Calu3 (cell line): ENCODE measurements at regions of chr3 and their contacts with region 1.

Region 1: GRCh38 chr3:24318668-24319287 is 175.9 kb downstream of the THRB start:
- DNase-seq: peak; percentile 10
- H3K4me3 Mint-ChIP-seq: no peak overlapping the region
- H3K27ac Mint-ChIP-seq: no peak overlapping the region
- H3K4me1 Mint-ChIP-seq: peaks cover 31% of the 10 kb centered on the region
- H3K27me3 Mint-ChIP-seq: no peaks in the 10 kb centered on the region
- CTCF ChIP-seq: no peak

Region 2: GRCh38 chr3:24270204-24270691 is 48.5 kb before region 1 on chr3:
- CTCF ChIA-PET with region 1: no interaction called
- intact Hi-C with region 1: loop called (anchors 5 kb)
- DNase-seq: no peak
- H3K4me3 Mint-ChIP-seq: no peak overlapping the region
- H3K27ac Mint-ChIP-seq: no peak overlapping the region
- H3K4me1 Mint-ChIP-seq: peaks cover 38% of the 10 kb centered on the region
- H3K27me3 Mint-ChIP-seq: no peaks in the 10 kb centered on the region
- CTCF ChIP-seq: no peak

Region 3: GRCh38 chr3:24336101-24336500 is 17.3 kb after region 1 on chr3:
- CTCF ChIA-PET with region 1: no interaction called
- intact Hi-C with region 1: no loop called
- DNase-seq: no peak
- H3K4me3 Mint-ChIP-seq: no peak overlapping the region
- H3K27ac Mint-ChIP-seq: no peak overlapping the region
- H3K4me1 Mint-ChIP-seq: no peaks in the 10 kb centered on the region
- H3K27me3 Mint-ChIP-seq: no peaks in the 10 kb centered on the region
- CTCF ChIP-seq: no peak